Panc1 (cell line): ENCODE measurements at regions of chr20 and their contacts with region 1.

Region 1: DNA sequence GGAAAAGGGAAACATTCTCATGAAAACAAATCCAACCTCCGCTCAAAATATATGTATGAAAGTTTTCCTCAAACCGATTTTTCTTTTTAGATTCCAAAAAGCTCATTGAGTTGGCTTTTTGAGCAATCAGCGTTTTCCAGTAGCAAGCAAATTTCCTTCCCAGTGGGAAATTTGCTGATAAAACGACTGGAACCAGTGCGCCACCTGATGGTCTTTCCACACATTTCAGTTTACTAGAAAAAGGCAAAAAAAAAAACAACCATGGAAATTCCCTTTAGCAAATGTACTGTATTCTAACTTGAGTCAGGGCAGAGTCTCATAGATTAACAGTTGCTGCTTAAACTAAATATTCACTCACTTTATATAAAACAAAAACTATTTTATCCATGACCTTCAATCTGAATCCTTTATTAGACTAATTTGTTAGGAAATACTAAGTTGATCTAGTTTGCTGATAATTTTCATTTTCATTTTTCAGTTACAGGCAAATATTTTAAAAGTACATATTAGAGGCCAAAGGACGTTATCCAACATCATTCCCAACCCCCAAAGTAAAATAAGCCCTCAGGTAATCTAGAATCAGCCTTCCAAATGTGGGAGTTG is 271.5 kb downstream of the FOXA2 start:
- DNase-seq: peak; percentile 8
- ATAC-seq: no peak
- H3K4me3 ChIP-seq: no peak overlapping the region
- H3K27ac ChIP-seq: no peak overlapping the region
- H3K4me1 ChIP-seq: no peaks in the 10 kb centered on the region
- H3K27me3 ChIP-seq: peaks cover 9% of the 10 kb centered on the region
- CTCF ChIP-seq: peak; percentile 77; the same call in 1 of the 2 replicates

Region 2: DNA sequence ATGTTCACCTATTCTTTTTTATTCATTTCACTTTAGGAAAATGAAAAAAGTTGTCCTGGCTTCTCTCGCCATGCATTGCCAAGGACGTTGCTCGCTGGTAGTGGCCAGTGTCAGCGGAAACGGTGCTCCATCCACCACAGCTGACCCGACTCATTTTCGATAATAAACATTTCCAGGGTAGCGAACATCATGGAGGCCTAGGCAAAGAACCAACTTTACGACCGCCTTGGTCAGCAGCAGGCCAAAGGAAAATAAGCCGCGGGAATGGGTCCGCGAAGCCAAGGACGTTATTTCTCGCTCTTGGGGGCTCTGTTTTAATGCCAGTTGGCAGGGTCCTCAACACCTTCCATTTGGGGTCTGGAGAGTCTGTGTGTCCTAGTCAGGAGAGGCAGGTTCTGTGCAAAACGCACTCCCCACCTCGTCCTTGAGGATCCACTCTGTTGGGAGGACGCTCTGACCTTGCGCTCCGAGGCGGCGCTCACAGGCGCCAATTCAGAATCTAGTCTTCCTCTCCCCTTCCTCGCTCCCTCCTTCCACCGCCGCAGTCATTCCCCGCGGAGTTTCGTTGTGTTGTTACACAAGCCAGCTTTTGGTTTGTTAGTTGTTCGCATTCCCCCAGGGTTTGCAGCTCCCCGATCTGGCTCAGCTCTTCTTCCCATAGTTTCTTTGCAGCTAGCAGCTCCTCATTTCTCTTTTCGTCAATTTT is 611.5 kb before region 1 on chr20:
- CTCF ChIA-PET with region 1: interaction called, 17 read pairs
- POLR2A ChIA-PET with region 1: no interaction called
- in situ Hi-C with region 1: no loop called
- intact Hi-C with region 1: no loop called
- DNase-seq: no peak
- ATAC-seq: no peak
- H3K4me3 ChIP-seq: no peak overlapping the region
- H3K27ac ChIP-seq: no peak overlapping the region
- H3K4me1 ChIP-seq: no peaks in the 10 kb centered on the region
- H3K27me3 ChIP-seq: peaks cover 8% of the 10 kb centered on the region
- CTCF ChIP-seq: no peak

Region 3: GRCh38 chr20:21719592-21720214 is 593.1 kb before region 1 on chr20:
- CTCF ChIA-PET with region 1: no interaction called
- POLR2A ChIA-PET with region 1: no interaction called
- in situ Hi-C with region 1: no loop called
- intact Hi-C with region 1: loop called (anchors 5 kb)
- DNase-seq: peak; percentile 45
- ATAC-seq: no peak
- H3K4me3 ChIP-seq: no peak overlapping the region
- H3K27ac ChIP-seq: no peak overlapping the region
- H3K4me1 ChIP-seq: no peaks in the 10 kb centered on the region
- H3K27me3 ChIP-seq: peaks cover 6% of the 10 kb centered on the region; the same call in 1 of the 2 replicates
- CTCF ChIP-seq: peak; percentile 77; the same call in 1 of the 2 replicates

Region 4: DNA sequence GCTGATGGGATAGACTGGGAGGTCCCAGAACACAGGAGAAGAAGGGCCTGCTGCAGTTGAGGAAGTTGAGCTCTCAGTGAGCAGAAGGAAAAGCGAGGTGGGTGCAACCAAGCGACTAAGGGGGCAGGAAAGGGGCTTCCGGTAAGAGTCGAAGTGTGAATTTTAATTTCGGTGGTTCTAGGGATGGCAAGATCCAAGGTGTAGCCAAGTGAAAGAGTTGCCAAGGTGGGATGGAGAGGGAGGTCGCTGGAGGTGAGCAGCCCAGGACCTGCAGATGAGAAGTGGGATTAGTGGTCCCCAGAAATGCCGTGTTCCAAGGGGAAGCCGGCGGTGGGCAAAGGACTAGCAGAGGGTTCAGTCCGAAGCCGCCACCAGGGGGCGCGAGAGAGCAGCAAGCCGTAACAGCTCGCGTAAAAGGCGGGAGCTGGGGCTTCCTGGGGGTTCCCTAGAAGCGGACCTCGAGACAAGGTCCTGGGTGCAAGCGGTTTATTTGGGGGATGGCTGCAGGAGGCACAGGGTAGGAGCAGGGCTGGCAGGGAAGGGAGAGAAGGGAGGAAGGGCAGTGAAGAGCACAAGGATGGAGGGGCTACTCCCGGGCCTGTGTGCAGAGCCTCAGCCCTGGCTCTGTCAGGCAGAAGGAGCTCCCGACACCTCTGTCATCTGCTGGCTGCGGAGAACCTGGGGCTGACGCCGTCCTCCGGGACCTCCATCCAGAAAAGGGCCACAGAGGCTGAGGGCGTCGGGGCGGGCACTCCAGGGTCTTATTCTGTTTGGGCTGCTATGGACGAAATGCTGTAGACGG is 503.8 kb before region 1 on chr20:
- CTCF ChIA-PET with region 1: interaction called, 12 read pairs
- POLR2A ChIA-PET with region 1: no interaction called
- in situ Hi-C with region 1: no loop called
- intact Hi-C with region 1: no loop called
- DNase-seq: no peak
- ATAC-seq: no peak
- H3K4me3 ChIP-seq: no peak overlapping the region
- H3K27ac ChIP-seq: no peak overlapping the region
- H3K4me1 ChIP-seq: no peaks in the 10 kb centered on the region
- H3K27me3 ChIP-seq: no peaks in the 10 kb centered on the region
- CTCF ChIP-seq: peak; percentile 89

Region 5: DNA sequence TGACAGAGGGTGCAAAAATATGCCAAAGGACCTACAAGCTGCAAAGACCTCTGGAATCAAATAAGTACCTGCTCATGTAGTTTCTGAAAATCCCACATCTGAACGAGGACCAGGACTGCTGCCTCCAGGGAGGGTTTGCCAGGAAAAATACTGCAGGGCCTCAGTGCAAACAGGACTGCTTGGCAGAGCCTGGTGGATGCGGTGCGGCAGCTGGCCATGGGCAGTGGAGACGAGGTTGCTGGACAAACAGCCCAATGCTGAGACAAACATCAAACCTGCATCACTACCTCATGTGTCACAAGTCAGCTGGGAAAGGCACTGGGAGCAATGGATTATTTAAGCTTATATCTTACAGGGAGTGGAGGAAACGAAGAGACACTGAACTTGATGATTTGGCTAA is 368.6 kb before region 1 on chr20:
- CTCF ChIA-PET with region 1: interaction called, 10 read pairs
- POLR2A ChIA-PET with region 1: no interaction called
- in situ Hi-C with region 1: no loop called
- intact Hi-C with region 1: no loop called
- DNase-seq: no peak
- ATAC-seq: no peak
- H3K4me3 ChIP-seq: no peak overlapping the region
- H3K27ac ChIP-seq: no peak overlapping the region
- H3K4me1 ChIP-seq: no peaks in the 10 kb centered on the region
- H3K27me3 ChIP-seq: no peaks in the 10 kb centered on the region
- CTCF ChIP-seq: no peak

Region 6: DNA sequence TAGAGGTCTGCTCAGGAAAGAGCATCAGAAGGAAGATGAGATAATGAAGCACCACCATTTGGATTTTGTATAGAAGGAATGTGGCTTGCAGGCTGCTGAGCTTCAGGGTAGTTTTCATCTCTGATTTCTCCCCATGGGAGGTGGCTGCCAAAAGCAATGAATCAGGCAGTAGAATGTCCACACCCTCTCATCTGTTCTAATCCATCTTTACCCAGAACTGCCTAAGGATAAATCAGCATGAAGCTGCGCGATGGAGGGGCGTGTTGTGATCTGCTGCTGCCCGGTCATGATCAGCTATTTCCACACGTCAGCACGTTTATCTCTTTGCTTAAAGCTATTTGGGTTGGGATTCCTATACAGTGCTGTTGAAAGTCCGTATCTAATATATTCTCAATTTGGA is 23.9 kb before region 1 on chr20:
- CTCF ChIA-PET with region 1: interaction called, 16 read pairs
- POLR2A ChIA-PET with region 1: no interaction called
- in situ Hi-C with region 1: no loop called
- intact Hi-C with region 1: no loop called
- DNase-seq: no peak
- ATAC-seq: no peak
- H3K4me3 ChIP-seq: no peak overlapping the region
- H3K27ac ChIP-seq: no peak overlapping the region
- H3K4me1 ChIP-seq: no peaks in the 10 kb centered on the region
- H3K27me3 ChIP-seq: no peaks in the 10 kb centered on the region
- CTCF ChIP-seq: no peak

Region 7: GRCh38 chr20:23668477-23668951 is 1355.7 kb after region 1 on chr20:
- CTCF ChIA-PET with region 1: interaction called, 12 read pairs
- POLR2A ChIA-PET with region 1: no interaction called
- in situ Hi-C with region 1: no loop called
- intact Hi-C with region 1: no loop called
- DNase-seq: peak; percentile 35
- ATAC-seq: peak; percentile 90
- H3K4me3 ChIP-seq: no peak overlapping the region
- H3K27ac ChIP-seq: no peak overlapping the region
- H3K4me1 ChIP-seq: no peaks in the 10 kb centered on the region
- H3K27me3 ChIP-seq: no peaks in the 10 kb centered on the region
- CTCF ChIP-seq: peak; percentile 89